ENCODE measurements at regions of chr19 and their contacts with region 1.

Region 1: GRCh38 chr19:41397086-41398049 is at the starts of genes BCKDHA and EXOSC5:
- DNase-seq: peak; percentile 99
- H3K4me3 Mint-ChIP-seq: peak within 1 kb of the TSS; percentile 95
- H3K27ac Mint-ChIP-seq: peak within 1 kb of the TSS; percentile 99
- H3K4me1 Mint-ChIP-seq: peaks cover 26% of the 10 kb centered on the region
- H3K27me3 Mint-ChIP-seq: no peaks in the 10 kb centered on the region
- total RNA-seq, gene BCKDHA: 18.9 and 20.5 TPM in 2 replicates
- total RNA-seq, gene EXOSC5: 50.4 and 54.3 TPM in 2 replicates

Region 2: DNA sequence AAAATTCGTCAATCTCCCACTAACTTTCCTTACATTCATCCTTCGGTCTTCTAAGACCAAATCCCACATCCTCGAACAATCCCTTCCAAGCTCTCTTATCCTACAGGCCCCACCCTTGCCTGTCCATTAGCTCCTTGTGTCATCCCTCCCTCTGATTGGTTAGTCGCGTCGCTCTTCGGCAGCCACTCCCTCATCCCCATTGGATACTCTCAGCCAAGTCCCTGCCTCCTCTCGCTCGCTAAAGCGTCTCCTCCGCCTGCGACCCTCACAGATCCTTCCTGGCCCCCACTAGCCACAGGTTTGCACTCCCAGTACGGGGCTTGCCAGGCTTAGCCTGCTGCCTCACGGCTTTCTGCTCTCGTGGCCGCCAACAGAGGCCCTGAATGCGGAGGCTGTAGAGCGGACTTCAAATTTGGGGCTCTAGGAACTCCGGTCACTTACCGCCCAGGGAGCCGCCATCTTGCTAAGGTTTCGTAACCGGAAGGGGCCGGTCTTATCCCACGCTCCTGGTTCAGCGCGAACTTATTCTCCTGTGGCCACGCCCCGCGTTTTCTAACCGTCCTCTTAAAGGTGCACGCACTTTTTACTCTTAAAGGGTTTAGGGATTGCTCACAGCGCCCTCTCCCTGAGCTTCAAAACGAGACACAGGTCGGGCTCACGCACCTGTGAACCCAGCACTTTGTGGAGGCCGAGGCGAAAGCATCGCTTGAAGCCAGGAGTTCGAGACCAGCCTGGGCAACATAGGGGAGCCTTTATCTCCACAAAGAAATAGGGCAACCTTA is 42.3 kb after region 1 on chr19 and contains the start of gene DMAC2:
- intact Hi-C with region 1: loop called (anchors 1 kb)
- DNase-seq: peak; percentile 95
- H3K4me3 Mint-ChIP-seq: no peak within 1 kb of the TSS
- H3K27ac Mint-ChIP-seq: no peak within 1 kb of the TSS
- H3K4me1 Mint-ChIP-seq: peaks cover 10% of the 10 kb centered on the region
- H3K27me3 Mint-ChIP-seq: no peaks in the 10 kb centered on the region
- total RNA-seq, gene DMAC2: 58.3 and 60.8 TPM in 2 replicates

Measured in activated T-helper 2 cell treated with anti-CD3 and anti-CD28 coated beads, Interferon-gamma antibody, Interleukin-2, Interleukin-4, amounts not matched to agents 10 μg/mL and 5 μg/mL and 100 μg/mL, durations not matched to agents 14 hours and 24 hours and 36 hours (primary cell).